ENCODE measurements at regions of chr5 and their contacts with region 1.

Region 1: DNA sequence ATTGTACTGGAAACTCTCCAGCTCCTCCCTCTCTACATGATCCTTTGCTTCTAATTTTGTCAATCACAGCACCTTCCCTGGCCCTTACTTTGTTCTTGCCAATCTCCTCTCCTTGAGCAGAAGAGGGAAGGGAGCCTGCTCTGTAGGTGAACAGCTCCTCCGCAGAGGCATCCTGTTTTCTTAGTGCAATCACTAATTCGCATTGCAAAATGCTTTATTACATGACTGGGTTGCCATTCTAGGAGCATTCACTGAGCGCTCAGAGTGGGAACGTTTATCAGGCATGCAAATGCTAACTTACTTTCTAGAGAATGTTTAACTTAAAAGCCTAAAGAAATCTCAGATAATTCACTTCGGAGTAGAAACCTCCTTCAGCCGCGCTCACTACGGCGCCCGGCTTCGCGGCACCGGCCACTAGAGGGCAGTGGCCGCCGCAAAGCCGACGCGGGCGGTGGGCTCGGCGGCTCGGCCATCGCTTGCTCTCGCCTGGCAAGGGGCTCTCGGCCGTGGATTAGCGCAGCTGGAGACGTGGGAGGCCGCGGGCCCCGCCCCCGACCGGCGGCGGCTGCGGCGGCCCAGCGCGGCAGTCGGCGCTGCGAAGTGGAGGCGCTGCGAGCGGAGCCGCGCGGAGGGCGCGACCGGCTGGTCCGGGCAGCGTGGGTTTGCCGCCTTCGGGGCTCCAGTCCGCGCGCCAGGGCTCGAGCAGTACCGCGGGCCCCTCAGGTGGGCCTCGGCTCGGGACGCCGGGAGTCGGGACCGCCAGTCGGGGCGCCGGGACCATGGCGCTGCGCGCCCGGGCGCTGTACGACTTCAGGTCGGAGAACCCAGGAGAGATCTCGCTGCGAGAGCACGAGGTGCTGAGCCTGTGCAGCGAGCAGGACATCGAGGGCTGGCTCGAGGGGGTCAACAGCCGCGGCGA is at the start of gene SNX18:
- DNase-seq: peak; percentile 69 to 96
- H3K4me3 ChIP-seq: peak within 1 kb of the TSS; percentile 93 to 96
- H3K27ac ChIP-seq: peak within 1 kb of the TSS; percentile 95 to 97
- H3K4me1 ChIP-seq: peaks cover 0 to 8% of the 10 kb centered on the region in 2 donors
- H3K27me3 ChIP-seq: no peaks in the 10 kb centered on the region
- CTCF ChIP-seq: peak; percentile 95 to 99 (median 97)
- total RNA-seq, gene SNX18: 200 TPM

Region 2: GRCh38 chr5:54206580-54207229 is 310.7 kb before region 1 on chr5:
- intact Hi-C with region 1: no loop called
- DNase-seq: no peak
- H3K4me3 ChIP-seq: no peak overlapping the region
- H3K27ac ChIP-seq: no peak overlapping the region
- H3K4me1 ChIP-seq: no peaks in the 10 kb centered on the region
- H3K27me3 ChIP-seq: no peaks in the 10 kb centered on the region
- CTCF ChIP-seq: no peak

Region 3: GRCh38 chr5:54254482-54255198 is 262.8 kb before region 1 on chr5:
- intact Hi-C with region 1: no loop called
- DNase-seq: no peak
- H3K4me3 ChIP-seq: peak overlapping the region; percentile 26 to 41
- H3K27ac ChIP-seq: no peak overlapping the region
- H3K4me1 ChIP-seq: peaks cover 0 to 4% of the 10 kb centered on the region in 2 donors
- H3K27me3 ChIP-seq: no peaks in the 10 kb centered on the region
- CTCF ChIP-seq: peak in 2 of 3 experiments; percentile 25 to 49

Region 4: DNA sequence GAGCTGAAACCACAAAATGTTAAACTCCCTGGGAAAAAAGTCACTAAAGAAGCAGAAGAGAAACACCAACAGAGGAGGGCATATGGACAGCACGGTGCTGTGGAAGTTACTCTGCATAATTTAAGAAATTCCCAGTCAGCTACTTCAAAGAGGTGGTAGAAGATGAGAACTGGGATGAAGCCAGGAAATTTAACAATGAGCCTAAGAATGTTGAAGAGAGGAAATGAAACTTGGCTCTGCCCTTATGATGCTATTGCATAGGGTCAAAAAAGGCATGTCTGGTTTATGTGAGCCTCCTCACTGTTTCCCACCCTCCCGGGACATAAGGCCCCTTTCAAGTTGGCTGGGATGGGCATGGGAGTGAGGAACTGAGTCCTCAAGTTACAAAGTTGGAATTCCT is 25.3 kb before region 1 on chr5:
- intact Hi-C with region 1: no loop called
- DNase-seq: no peak
- H3K4me3 ChIP-seq: no peak overlapping the region
- H3K27ac ChIP-seq: no peak overlapping the region
- H3K4me1 ChIP-seq: no peaks in the 10 kb centered on the region
- H3K27me3 ChIP-seq: no peaks in the 10 kb centered on the region
- CTCF ChIP-seq: no peak

Region 5: GRCh38 chr5:54580997-54581811 is 63.8 kb after region 1 on chr5:
- intact Hi-C with region 1: loop called (anchors 5 kb)
- DNase-seq: no peak
- H3K4me3 ChIP-seq: no peak overlapping the region
- H3K27ac ChIP-seq: peak overlapping the region; percentile 76 to 80
- H3K4me1 ChIP-seq: peaks cover 0 to 28% of the 10 kb centered on the region in 2 donors
- H3K27me3 ChIP-seq: no peaks in the 10 kb centered on the region
- CTCF ChIP-seq: no peak

Region 6: GRCh38 chr5:54646356-54647101 is 129.1 kb after region 1 on chr5:
- intact Hi-C with region 1: loop called (anchors 2 kb)
- DNase-seq: peak; percentile 77 to 94
- H3K4me3 ChIP-seq: peak overlapping the region; percentile 34 to 55
- H3K27ac ChIP-seq: peak overlapping the region; percentile 89 to 93
- H3K4me1 ChIP-seq: peaks cover 17 to 50% of the 10 kb centered on the region in 2 donors
- H3K27me3 ChIP-seq: no peaks in the 10 kb centered on the region
- CTCF ChIP-seq: peak in 1 of 3 experiments; percentile 7

Region 7: DNA sequence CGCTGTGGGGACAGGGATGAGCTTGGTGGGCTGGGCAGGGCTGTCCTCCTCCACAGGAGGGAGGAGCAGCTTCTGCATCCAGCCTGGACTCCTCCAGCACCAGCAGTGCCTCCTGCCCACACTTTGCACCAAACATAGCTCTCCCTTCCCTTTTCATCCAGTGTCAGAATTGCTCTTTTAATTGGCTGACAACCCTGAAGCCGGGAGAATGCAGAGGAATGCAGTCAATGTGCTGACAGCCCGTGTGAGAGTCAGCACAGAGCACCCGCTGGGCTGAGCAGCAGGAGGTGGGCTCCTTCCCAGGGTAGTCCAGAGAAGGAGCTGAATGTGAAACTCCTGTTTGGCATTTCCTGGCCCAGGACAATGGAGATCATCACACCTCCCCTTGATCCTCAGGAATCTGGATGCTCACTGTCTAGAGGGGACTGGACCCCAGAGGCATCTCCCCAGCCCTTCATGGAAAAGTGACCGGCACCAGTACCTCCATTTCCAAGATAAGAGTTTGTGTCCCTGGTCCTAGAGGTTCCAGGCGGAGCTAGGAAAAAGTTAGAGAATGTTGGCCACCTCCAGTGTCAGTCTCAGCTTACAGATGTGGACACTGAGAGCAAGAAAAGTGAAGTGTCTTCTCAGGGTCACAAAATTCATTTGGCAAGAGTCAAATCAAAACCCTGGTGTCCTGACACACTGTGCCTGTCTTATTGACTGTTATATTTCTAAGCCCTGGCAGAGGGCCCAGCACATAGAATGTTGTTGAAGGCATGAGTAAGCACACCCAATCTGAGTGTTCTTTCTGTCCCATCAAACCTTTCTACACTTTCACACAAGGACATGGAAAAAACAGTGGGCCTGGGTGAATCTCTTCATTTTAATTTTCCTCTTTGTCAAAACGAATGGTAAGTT is 202.2 kb after region 1 on chr5:
- intact Hi-C with region 1: loop called (anchors 1 kb)
- DNase-seq: peak in 1 of 2 donors; percentile 85
- H3K4me3 ChIP-seq: peak overlapping the region; percentile 3 to 22
- H3K27ac ChIP-seq: peak overlapping the region; percentile 84 to 86
- H3K4me1 ChIP-seq: peaks cover 13 to 46% of the 10 kb centered on the region in 2 donors
- H3K27me3 ChIP-seq: no peaks in the 10 kb centered on the region
- CTCF ChIP-seq: no peak

Region 8: GRCh38 chr5:54867310-54867944 is 350.0 kb after region 1 on chr5:
- intact Hi-C with region 1: loop called (anchors 1 kb)
- DNase-seq: no peak
- H3K4me3 ChIP-seq: peak overlapping the region; percentile 28 to 50
- H3K27ac ChIP-seq: no peak overlapping the region
- H3K4me1 ChIP-seq: no peaks in the 10 kb centered on the region
- H3K27me3 ChIP-seq: no peaks in the 10 kb centered on the region
- CTCF ChIP-seq: peak; percentile 51 to 68 (median 63)

Measured in ascending aorta (tissue), 2 donors.